ENCODE measurements at regions of chr18 and their contacts with region 1.

Region 1: DNA sequence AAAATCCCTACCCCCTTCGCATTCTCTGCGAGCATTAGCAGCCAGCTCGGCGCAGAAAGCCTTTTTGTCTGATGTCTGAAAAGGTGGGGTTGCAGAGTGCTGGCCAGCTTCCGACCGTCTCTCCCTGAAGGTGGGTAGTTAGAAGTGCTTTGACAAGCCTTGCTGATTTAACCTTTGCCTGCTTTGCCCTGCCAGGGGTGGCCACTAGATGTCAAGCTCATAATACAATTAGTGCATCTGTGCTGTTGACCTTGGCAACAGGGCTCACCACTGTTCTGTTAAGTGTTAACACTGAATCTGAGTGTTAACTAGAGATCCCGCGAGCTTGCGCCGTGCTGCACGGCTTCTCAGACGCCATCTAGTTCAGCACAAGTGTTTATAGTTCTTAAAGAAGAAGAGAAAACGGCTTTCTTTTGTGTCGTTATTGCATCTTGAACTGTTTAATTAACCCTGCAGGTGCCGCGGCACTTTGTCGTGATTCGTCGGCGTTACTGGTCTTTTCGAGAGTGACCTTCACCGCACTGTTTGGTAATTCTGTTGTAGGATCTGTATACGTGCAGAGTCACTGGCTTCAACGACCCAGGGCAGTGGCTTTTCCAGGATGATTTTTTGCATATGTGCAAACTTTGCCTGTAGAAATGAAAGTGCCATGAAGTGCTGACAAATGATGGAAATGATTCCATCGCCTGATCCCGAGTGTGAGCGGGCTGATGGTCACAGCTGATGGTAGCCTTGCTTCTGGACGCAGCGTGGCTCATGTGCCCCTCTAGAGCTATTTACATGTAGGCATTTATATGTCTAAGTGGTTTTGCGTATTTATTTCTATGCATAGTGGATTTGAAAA is 5.5 kb downstream of the SALL3 start:
- DNase-seq: peak in 3 of 10 donors; percentile 59 to 67 (median 65)

Region 2: DNA sequence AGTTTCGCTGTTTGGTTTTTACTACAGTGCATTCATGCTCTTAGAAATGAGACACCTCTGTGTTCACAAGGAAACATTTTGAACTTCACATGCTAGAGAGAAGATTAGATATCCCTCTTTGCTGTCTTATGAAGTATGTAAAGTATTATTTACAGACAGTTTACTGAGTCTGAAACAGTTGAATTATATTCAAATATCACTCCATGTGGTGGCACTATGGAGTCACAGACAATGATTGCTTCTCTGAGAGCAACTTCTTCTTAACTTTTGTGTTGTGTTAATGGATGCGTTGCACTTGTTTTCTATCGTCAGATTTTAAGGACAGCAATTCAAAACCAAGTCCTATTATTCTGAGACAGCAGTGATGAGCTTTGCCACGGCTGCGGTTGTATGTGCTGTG is 911.9 kb before region 1 on chr18:
- intact Hi-C with region 1: loop called (anchors 5 kb)
- DNase-seq: no peak

Region 3: GRCh38 chr18:78659748-78660147 is 325.4 kb before region 1 on chr18:
- intact Hi-C with region 1: loop called (anchors 2 kb)
- DNase-seq: peak in 5 of 10 donors; percentile 10 to 83 (median 31)

Measured in posterior cingulate gyrus (tissue), 11 donors.